Left ventricle myocardium superior (tissue), 1 donor: ENCODE measurements at regions of chr6 and their contacts with region 1.

Region 1: GRCh38 chr6:90080876-90081481 is 186.7 kb downstream of the GJA10 start:
- DNase-seq: no peak
- ATAC-seq: no peak

Region 2: GRCh38 chr6:89984926-89985750 is 95.8 kb before region 1 on chr6:
- intact Hi-C with region 1: loop called (anchors 10 kb)
- DNase-seq: peak; percentile 89
- ATAC-seq: peak; percentile 95

Region 3: GRCh38 chr6:90304308-90304707 is 223.3 kb after region 1 on chr6:
- intact Hi-C with region 1: no loop called
- DNase-seq: no peak
- ATAC-seq: no peak